ENCODE measurements at regions of chr4 and their contacts with region 1.

Region 1: DNA sequence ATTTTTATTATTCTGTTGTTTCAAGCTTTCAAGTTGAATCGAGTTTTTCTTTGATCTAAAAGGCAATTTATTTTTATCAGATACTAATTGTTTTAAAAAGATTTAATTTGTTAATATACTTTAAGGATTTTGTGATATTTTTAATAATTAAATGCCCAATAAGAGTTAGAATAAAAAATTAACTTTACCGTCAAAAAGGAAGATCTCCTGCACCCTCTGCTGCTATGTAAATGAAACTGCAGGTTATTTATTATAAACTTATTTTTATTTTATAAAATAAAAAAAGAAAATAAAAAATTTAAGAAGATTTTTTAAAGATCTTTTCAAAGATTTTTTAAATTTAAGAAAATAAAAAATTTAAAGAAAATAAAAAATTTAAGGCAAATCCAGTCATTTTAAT is 166.1 kb downstream of the CCSER1 start:
- DNase-seq: no peak
- ATAC-seq: no peak
- H3K4me3 ChIP-seq: no peak overlapping the region
- H3K27ac ChIP-seq: no peak overlapping the region
- H3K4me1 ChIP-seq: no peaks in the 10 kb centered on the region
- H3K27me3 ChIP-seq: no peaks in the 10 kb centered on the region
- CTCF ChIP-seq: peak; percentile 27 to 71 (median 56)
- POLR2A ChIP-seq: no peak

Region 2: DNA sequence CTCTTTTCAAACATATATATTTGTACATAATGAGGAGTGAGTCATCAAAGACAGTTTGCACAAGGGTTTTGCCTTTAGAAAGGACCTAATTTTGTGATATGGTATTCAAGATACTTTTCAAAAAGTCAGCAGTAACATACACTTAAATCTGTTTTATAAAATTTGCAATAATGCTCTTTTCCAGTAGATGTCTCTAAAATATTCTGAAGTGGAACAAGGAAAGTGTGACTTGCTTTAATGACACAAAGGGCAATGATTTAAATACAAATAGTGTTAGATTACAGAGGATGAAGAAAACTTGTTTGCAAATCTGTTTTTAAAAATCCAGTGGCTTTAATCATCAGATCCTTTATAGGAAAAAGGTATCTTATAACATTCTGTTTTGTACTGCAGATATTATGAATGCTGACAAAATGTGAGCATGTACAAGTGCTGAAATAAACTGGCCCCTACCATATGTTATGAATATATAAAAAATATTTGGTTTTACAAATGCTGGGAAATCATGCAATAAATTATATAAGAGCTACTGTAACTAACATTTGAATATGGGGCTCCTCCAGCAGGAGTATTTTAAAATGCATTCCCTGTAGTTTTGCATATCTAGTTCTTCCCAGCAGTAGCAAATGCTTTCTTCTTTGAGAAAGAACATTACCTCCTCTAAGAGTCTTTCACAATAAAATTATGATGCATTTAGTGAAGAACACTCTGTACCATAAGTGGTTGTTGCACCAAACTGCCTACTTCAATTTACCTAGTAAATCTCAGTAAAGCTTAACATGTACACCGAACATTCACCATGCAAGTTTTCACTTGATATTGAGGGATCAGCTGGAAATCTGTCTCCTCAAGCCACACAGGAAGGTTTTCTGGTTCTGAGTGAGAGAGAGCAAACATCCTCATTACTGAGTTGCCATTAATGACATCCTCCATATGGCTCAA is 378.4 kb before region 1 on chr4:
- intact Hi-C with region 1: loop called in 1 of 10 experiments (anchors 5 kb)
- DNase-seq: no peak
- ATAC-seq: no peak
- H3K4me3 ChIP-seq: no peak overlapping the region
- H3K27ac ChIP-seq: no peak overlapping the region
- H3K4me1 ChIP-seq: no peaks in the 10 kb centered on the region
- H3K27me3 ChIP-seq: no peaks in the 10 kb centered on the region
- CTCF ChIP-seq: no peak
- POLR2A ChIP-seq: no peak

Region 3: GRCh38 chr4:89949782-89950387 is 343.4 kb before region 1 on chr4:
- intact Hi-C with region 1: loop called in 1 of 10 experiments (anchors 5 kb)
- DNase-seq: no peak
- ATAC-seq: no peak
- H3K4me3 ChIP-seq: no peak overlapping the region
- H3K27ac ChIP-seq: no peak overlapping the region
- H3K4me1 ChIP-seq: no peaks in the 10 kb centered on the region
- H3K27me3 ChIP-seq: no peaks in the 10 kb centered on the region
- CTCF ChIP-seq: peak in 7 of 12 donors; percentile 5 to 32 (median 25)
- POLR2A ChIP-seq: no peak

Region 4: GRCh38 chr4:90025248-90025647 is 268.1 kb before region 1 on chr4:
- intact Hi-C with region 1: loop called in 5 of 10 experiments (anchors 5 to 10 kb)
- DNase-seq: no peak
- ATAC-seq: no peak
- H3K4me3 ChIP-seq: no peak overlapping the region
- H3K27ac ChIP-seq: no peak overlapping the region
- H3K4me1 ChIP-seq: peaks cover 0 to 9% (median 0%) of the 10 kb centered on the region in 12 donors
- H3K27me3 ChIP-seq: no peaks in the 10 kb centered on the region
- CTCF ChIP-seq: peak in 3 of 12 donors; percentile 9 to 31 (median 24)
- POLR2A ChIP-seq: no peak

Region 5: DNA sequence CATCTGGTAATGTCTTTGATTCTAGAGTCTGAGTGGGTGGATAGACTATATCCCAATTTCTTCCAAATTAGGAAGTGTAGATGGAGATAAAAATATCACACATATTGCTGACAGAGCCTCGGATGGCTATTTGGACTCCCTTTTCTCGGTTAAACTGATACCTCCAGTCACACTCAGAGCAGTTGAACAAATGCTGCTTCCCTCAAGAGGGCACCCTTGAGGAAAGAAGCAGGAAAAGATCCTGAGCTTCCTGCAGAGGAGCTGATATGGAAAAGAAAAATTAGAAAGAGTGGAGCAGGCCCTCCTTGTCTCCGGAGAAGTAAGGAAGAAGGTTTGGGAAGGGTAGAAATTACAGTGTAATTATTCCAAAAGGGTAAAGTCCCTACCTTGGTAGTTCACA is 262.4 kb before region 1 on chr4:
- intact Hi-C with region 1: loop called in 5 of 10 experiments (anchors 5 to 10 kb)
- DNase-seq: no peak
- ATAC-seq: no peak
- H3K4me3 ChIP-seq: no peak overlapping the region
- H3K27ac ChIP-seq: no peak overlapping the region
- H3K4me1 ChIP-seq: peaks cover 0 to 9% (median 0%) of the 10 kb centered on the region in 12 donors
- H3K27me3 ChIP-seq: no peaks in the 10 kb centered on the region
- CTCF ChIP-seq: peak in 2 of 12 donors; percentile 10 to 21
- POLR2A ChIP-seq: no peak

Region 6: GRCh38 chr4:90118527-90119195 is 174.7 kb before region 1 on chr4:
- intact Hi-C with region 1: loop called in 5 of 10 experiments (anchors 2 to 5 kb)
- DNase-seq: no peak
- ATAC-seq: no peak
- H3K4me3 ChIP-seq: no peak overlapping the region
- H3K27ac ChIP-seq: no peak overlapping the region
- H3K4me1 ChIP-seq: no peaks in the 10 kb centered on the region
- H3K27me3 ChIP-seq: no peaks in the 10 kb centered on the region
- CTCF ChIP-seq: no peak
- POLR2A ChIP-seq: no peak

Region 7: GRCh38 chr4:90127223-90127705 is 166.1 kb before region 1 on chr4 and contains the start of gene CCSER1:
- intact Hi-C with region 1: loop called in 9 of 10 experiments (anchors 2 to 5 kb)
- DNase-seq: peak; percentile 78 to 87 (median 81)
- ATAC-seq: peak; percentile 96 to 98 (median 98)
- H3K4me3 ChIP-seq: peak within 1 kb of the TSS; percentile 36 to 84 (median 71)
- H3K27ac ChIP-seq: peak within 1 kb of the TSS in 11 of 12 donors; percentile 61 to 84 (median 79)
- H3K4me1 ChIP-seq: peaks cover 0 to 21% (median 6%) of the 10 kb centered on the region in 12 donors
- H3K27me3 ChIP-seq: peaks cover 0 to 5% (median 0%) of the 10 kb centered on the region in 9 donors
- CTCF ChIP-seq: peak in 1 of 12 donors; percentile 12
- POLR2A ChIP-seq: peak; percentile 66 to 94
- total RNA-seq, gene CCSER1: 5.0 to 15.8 (median 13.3) TPM